Right ventricle myocardium superior (tissue), 1 donor: ENCODE measurements at regions of chr6 and their contacts with region 1.

Region 1: GRCh38 chr6:72411872-72412708 is 209.8 kb upstream of the KCNQ5 start:
- DNase-seq: peak; percentile 74
- ATAC-seq: peak; percentile 85

Region 2: DNA sequence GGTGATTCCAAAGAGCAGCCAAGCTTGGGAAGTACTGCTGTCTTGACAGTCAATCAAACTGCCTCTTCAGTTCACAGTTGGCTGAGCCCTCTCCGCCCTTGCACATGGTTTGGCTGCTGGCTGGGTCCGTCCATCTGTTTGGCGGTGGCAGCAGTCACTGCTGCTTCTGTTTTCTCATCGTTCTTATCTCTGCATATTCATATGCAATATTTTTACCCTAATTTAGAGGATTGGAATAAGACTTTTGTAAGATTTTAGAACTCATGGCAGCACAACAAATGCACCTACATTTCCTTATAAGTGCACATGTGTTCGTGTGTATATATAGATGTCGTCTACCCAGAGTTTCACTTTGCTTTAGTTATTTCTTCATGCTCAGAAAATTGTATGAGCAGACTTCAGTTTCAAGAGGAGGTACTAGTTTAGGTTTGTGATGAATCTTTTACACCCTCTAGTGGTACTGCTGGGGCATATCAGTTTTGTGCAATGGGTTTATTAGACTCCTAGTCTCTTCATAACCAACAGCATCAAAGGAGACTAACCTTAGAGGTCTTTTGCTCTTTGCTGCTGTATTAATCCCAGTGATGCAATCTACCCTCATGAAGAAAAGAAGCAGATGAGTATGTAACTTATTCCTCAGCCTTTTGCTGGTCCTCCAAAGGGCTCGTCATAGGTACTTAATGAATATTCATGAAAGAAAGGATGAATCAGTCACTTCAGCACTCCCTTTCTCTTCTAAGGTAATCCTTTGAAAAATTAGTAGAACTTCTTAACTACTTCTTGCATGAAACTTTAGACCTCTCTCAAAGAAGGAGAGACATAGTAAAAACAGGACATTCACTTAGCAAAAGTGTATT is 768.9 kb after region 1 on chr6:
- intact Hi-C with region 1: loop called (anchors 5 kb)
- DNase-seq: no peak
- ATAC-seq: peak; percentile 87

Region 3: DNA sequence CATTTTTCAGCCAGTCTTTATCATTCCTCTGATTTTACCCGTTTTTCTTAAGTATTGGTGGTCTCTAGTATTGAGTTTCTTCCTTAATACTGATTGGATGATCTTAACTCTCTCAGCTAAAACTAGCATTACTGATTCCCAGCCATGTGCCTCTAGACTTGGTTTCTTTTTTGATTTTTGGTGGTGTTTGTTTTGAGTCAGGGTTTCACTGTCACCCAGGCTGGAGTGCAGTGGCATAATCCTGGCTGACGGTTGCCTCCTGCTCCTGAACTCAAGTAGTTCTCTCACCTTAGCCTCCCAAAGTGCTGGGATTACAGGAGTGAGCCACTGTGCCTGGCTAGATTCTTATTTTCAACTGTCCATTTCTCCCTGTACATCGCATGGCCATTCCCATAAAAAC is 917.1 kb after region 1 on chr6:
- intact Hi-C with region 1: loop called (anchors 10 kb)
- DNase-seq: no peak
- ATAC-seq: no peak